Ovary (tissue), 10 donors: ENCODE measurements at regions of chr19 and their contacts with region 1.

Region 1: GRCh38 chr19:7394731-7395359 is 46.1 kb downstream of the ARHGEF18 start:
- DNase-seq: peak; percentile 84 to 97 (median 91)
- H3K4me3 ChIP-seq: peak overlapping the region; percentile 94
- H3K27ac ChIP-seq: peak overlapping the region in 1 of 2 donors; percentile 49
- H3K4me1 ChIP-seq: peaks cover 4% of the 10 kb centered on the region
- H3K27me3 ChIP-seq: no peaks in the 10 kb centered on the region
- CTCF ChIP-seq: peak in 1 of 3 donors; percentile 9
- EP300 ChIP-seq: no peak
- POLR2A ChIP-seq: peak; percentile 25

Region 2: GRCh38 chr19:7211204-7211951 is 183.5 kb before region 1 on chr19:
- intact Hi-C with region 1: no loop called
- DNase-seq: peak; percentile 85 to 90 (median 86)
- H3K4me3 ChIP-seq: no peak overlapping the region
- H3K27ac ChIP-seq: peak overlapping the region; percentile 65 to 84
- H3K4me1 ChIP-seq: peaks cover 41% of the 10 kb centered on the region
- H3K27me3 ChIP-seq: no peaks in the 10 kb centered on the region
- CTCF ChIP-seq: no peak
- EP300 ChIP-seq: no peak
- POLR2A ChIP-seq: no peak

Region 3: GRCh38 chr19:7522072-7522922 is 127.5 kb after region 1 on chr19 and contains the start of gene MCOLN1:
- intact Hi-C with region 1: loop called in 1 of 4 experiments (anchors 10 kb)
- DNase-seq: peak; percentile 99 to 100 (median 100)
- H3K4me3 ChIP-seq: peak within 1 kb of the TSS; percentile 63
- H3K27ac ChIP-seq: peak within 1 kb of the TSS in 1 of 2 donors; percentile 51
- H3K4me1 ChIP-seq: peaks cover 12% of the 10 kb centered on the region
- H3K27me3 ChIP-seq: no peaks in the 10 kb centered on the region
- CTCF ChIP-seq: peak in 1 of 3 donors; percentile 29
- EP300 ChIP-seq: no peak
- POLR2A ChIP-seq: peak; percentile 38
- total RNA-seq, gene MCOLN1: 9.2 to 18.9 (median 13.6) TPM

Region 4: GRCh38 chr19:7540761-7541491 is 146.1 kb after region 1 on chr19:
- intact Hi-C with region 1: loop called in 2 of 4 experiments (anchors 10 kb)
- DNase-seq: peak in 3 of 5 donors; percentile 10 to 42 (median 31)
- H3K4me3 ChIP-seq: no peak overlapping the region
- H3K27ac ChIP-seq: no peak overlapping the region
- H3K4me1 ChIP-seq: no peaks in the 10 kb centered on the region
- H3K27me3 ChIP-seq: no peaks in the 10 kb centered on the region
- CTCF ChIP-seq: no peak
- EP300 ChIP-seq: no peak
- POLR2A ChIP-seq: no peak